Mammary epithelial cell (primary cell): ENCODE measurements at regions of chr20 and their contacts with region 1.

Region 1: DNA sequence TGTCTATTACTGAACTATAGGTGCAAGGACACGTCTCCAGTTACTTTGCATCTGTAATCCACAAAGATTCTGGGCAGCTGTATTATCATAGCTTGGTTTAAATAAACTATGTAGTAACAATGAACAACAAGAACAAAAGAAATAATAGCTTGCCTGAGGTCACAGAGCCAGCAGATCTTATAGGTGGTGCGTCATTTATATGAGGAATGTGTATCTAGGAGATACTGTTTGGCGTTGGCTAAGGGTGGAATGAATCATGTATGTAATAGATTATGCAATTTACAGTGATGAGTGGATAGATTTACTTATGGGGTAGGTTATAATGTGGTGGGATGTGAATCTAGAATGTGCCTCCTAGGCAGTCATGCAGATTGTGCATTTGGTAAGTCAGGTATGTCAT is 42.8 kb downstream of the HNF4A start:
- DNase-seq: peak; percentile 89
- H3K4me3 ChIP-seq: no peak overlapping the region
- H3K27ac ChIP-seq: peak overlapping the region; percentile 38
- H3K4me1 ChIP-seq: peaks cover 13% of the 10 kb centered on the region
- H3K27me3 ChIP-seq: no peaks in the 10 kb centered on the region
- CTCF ChIP-seq: no peak

Region 2: DNA sequence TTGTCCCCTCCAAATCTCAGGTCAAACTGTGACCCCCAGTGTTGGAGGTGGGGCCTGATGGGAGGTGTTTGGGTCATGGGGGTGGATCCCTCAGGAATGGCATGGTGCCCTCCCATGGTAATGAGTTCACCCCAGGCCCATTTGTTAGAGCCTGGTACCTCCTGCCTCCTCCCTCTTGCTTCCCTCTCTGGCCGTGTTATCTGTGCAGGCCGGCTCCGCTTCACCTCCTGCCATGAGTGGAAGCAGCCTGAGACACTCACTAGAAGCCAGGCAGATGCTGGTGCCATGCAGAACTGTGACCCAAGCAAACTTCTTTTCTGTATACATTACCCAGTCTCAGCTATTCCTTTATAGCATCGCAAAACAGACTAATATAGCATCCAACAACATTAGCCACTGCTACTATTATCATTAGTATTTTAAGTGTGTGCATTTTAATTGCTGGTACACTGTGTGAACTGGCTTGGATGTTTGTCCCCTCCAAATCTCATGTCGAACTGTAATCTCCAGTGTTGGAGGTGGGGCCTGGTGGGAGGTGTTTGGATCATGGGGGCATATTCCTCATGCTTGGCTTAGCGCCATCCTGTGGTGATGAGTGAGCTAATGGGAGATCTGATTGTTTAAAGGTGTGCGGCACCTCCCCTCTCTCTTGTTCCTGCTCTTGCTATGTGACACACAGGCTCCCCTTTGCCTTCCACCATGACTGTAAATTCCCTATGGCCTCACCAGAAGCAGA is 175.5 kb before region 1 on chr20:
- CTCF ChIA-PET with region 1: no interaction called
- dilution Hi-C with region 1: loop called (anchors 5 kb)
- in situ Hi-C with region 1: no loop called
- intact Hi-C with region 1: no loop called
- DNase-seq: no peak
- H3K4me3 ChIP-seq: no peak overlapping the region
- H3K27ac ChIP-seq: no peak overlapping the region
- H3K4me1 ChIP-seq: no peaks in the 10 kb centered on the region
- H3K27me3 ChIP-seq: no peaks in the 10 kb centered on the region
- CTCF ChIP-seq: no peak

Region 3: DNA sequence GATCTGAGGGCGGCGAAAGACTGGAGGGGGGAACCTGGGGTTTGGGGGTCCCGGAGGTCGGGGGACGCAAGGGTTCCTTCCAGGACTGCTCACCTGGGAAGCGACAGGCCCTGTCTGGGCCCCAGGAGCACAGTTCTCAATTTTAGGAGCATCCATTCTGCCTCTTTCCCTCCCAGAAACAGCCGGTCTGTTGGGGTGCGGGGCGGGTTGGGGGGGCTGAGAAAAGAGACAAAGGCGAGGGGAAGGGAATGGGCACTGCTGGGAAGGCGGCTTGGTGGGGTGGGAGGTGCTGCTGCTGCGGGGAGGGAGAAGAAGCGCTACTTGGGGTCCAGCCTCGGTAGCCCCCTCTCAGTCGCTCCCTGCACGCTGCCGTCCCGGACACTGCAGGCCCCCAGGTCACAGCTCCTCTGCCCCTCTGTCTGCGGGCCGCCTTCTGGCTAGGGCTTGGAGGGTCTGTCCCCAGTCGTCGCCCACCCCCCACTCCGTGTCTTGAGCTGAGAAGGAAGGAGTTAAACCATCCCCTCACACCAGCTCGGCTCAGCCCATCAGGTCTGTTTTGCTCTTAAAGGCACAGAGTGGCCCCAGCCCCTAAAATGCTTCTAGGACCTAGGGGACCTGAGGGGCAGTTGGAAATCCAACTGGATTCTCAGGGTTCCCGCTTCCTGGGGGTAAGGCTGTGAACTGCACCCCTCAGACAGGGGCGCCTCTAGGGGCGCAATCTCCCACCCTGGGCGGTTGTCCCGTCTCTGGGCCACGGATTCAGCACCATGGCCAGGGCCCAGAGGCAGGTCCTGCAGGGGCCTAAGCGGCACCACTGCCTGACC is 150.5 kb before region 1 on chr20:
- CTCF ChIA-PET with region 1: no interaction called
- dilution Hi-C with region 1: loop called (anchors 10 kb)
- in situ Hi-C with region 1: no loop called
- intact Hi-C with region 1: no loop called
- DNase-seq: peak; percentile 5
- H3K4me3 ChIP-seq: no peak overlapping the region
- H3K27ac ChIP-seq: no peak overlapping the region
- H3K4me1 ChIP-seq: no peaks in the 10 kb centered on the region
- H3K27me3 ChIP-seq: peaks cover 13% of the 10 kb centered on the region
- CTCF ChIP-seq: peak; percentile 16 to 25

Region 4: GRCh38 chr20:44467289-44467883 is 69.1 kb after region 1 on chr20:
- CTCF ChIA-PET with region 1: no interaction called
- dilution Hi-C with region 1: loop called (anchors 5 kb)
- in situ Hi-C with region 1: no loop called
- intact Hi-C with region 1: no loop called
- DNase-seq: peak; percentile 63
- H3K4me3 ChIP-seq: no peak overlapping the region
- H3K27ac ChIP-seq: no peak overlapping the region
- H3K4me1 ChIP-seq: peaks cover 24% of the 10 kb centered on the region
- H3K27me3 ChIP-seq: no peaks in the 10 kb centered on the region
- CTCF ChIP-seq: no peak

Region 5: DNA sequence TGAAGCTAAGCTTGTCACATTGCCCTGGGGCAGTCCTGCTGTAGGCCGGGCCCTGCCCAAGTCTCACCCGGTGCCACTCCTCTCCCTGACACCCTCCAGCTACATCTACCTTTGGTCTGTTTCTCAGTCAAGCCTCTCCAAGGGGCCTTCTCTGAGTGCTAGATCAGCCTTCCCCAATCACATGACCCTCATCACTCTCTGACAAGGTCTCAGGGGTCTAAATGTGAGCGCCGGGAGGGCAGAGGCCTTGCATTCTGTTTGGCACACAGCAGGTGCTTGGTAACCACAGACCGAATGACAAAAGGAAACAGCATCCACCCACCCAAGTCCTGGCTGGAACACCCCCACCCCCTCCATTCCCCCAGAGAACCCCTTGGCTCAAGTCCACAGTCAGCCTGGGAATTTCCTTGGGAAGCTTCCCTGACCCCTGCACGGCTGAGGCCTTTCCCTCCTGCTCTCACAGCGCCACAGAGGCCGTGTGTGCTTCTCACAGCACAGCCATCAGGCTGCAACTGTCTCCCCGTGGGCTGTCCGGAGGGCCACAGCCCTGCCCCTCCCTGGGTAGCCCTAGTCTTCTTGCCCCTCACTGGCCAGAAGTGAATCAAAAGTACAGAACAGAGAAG is 217.0 kb after region 1 on chr20:
- CTCF ChIA-PET with region 1: no interaction called
- dilution Hi-C with region 1: loop called (anchors 5 kb)
- in situ Hi-C with region 1: no loop called
- intact Hi-C with region 1: no loop called
- DNase-seq: no peak
- H3K4me3 ChIP-seq: no peak overlapping the region
- H3K27ac ChIP-seq: no peak overlapping the region
- H3K4me1 ChIP-seq: peaks cover 12% of the 10 kb centered on the region
- H3K27me3 ChIP-seq: no peaks in the 10 kb centered on the region
- CTCF ChIP-seq: no peak

Region 6: DNA sequence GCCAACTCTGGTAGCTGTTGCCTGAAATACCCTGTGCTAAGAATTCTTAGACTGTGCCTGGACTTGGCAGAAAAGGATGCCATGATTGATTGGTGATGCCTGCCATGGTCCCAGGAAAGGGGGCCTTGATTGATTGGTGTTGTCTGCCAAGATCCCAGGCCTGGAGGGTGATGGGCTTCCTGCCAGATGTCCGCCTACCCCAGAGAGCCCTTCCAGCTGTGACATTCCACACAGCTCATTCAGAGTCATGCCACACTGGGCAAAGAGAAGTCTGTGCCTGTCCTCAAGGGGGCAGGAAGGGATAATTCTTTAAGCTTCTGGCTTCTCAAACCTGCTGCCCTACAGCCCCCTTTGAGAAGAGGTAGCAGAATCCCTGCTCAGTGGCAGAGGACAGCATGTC is 387.5 kb after region 1 on chr20:
- CTCF ChIA-PET with region 1: no interaction called
- dilution Hi-C with region 1: no loop called
- in situ Hi-C with region 1: no loop called
- intact Hi-C with region 1: no loop called
- DNase-seq: peak; percentile 35
- H3K4me3 ChIP-seq: no peak overlapping the region
- H3K27ac ChIP-seq: no peak overlapping the region
- H3K4me1 ChIP-seq: peaks cover 2% of the 10 kb centered on the region
- H3K27me3 ChIP-seq: peaks cover 2% of the 10 kb centered on the region
- CTCF ChIP-seq: peak in 1 of 2 donors; percentile 39